Colonic mucosa (tissue), 4 donors: ENCODE measurements at regions of chr2 and their contacts with region 1.

Region 1: DNA sequence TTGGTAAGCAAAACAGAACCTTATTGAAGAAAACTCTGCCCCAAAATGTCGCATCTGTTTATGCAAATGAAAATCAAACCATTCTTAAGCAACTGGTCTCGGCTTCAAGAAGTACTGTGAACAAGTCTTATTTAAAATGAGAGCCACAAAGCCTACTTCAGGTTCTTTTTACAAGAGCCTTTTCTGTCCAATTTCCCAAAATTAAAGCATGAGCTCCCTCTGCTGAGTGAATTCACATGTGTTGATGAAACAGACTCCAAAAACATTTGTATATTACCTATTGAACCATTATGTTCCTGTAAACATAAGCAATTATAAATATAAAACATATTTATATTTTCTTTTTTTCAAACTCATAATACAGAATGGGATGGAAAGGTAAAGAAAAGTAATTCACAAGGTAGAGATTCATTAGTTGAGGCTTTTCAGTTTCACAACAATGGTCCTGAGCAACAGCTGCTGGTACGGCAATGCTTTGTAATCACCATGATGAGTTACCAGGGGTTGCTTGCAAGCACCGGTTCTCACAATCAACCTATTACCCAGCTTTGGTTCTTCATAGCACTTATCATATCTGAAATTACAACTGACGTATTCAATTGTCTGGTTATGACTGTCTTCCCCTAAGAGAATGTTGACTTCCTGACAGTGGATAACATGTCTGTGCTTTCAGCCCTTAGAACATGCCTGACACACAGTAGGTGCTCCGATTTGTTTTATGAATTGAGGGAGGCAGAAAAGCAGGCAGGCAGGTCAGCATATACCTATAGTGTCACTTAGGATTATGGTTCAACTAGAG is 108.4 kb upstream of the BZW1 start:
- DNase-seq: peak; percentile 52
- H3K4me3 ChIP-seq: no peak overlapping the region
- H3K27ac ChIP-seq: no peak overlapping the region
- H3K4me1 ChIP-seq: no peaks in the 10 kb centered on the region
- H3K27me3 ChIP-seq: no peaks in the 10 kb centered on the region
- CTCF ChIP-seq: peak; percentile 38

Region 2: DNA sequence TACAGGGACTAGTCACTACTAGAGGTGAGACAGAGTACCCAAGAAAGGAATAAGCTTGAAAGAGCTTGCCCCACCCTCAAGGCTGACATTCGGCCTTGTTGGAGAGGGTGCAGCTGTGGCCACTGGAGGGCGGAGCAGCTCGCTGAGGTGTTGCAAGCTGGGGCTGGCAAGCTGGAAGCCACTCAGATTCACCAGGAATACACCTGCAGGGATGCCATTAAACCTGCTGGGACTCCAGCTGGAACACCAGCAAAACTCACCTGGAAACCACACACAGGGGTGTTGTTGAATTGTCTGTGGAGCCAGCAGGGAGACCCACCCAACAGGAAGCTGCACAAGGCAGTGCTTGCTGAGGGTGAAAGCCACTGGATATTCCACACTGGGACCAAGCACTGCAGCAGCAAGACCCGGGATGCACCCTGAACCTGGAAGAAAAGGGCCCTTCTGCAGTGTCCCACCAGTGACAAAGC is 219.6 kb before region 1 on chr2:
- intact Hi-C with region 1: loop called (anchors 10 kb)
- DNase-seq: peak; percentile 76
- H3K4me3 ChIP-seq: no peak overlapping the region
- H3K27ac ChIP-seq: no peak overlapping the region
- H3K4me1 ChIP-seq: no peaks in the 10 kb centered on the region
- H3K27me3 ChIP-seq: no peaks in the 10 kb centered on the region
- CTCF ChIP-seq: peak; percentile 62

Region 3: GRCh38 chr2:200578778-200579177 is 124.5 kb before region 1 on chr2:
- intact Hi-C with region 1: loop called (anchors 5 kb)
- DNase-seq: no peak
- H3K4me3 ChIP-seq: no peak overlapping the region
- H3K27ac ChIP-seq: no peak overlapping the region
- H3K4me1 ChIP-seq: no peaks in the 10 kb centered on the region
- H3K27me3 ChIP-seq: no peaks in the 10 kb centered on the region
- CTCF ChIP-seq: peak; percentile 35

Region 4: GRCh38 chr2:201007561-201007998 is 304.3 kb after region 1 on chr2:
- intact Hi-C with region 1: no loop called
- DNase-seq: peak; percentile 62
- H3K4me3 ChIP-seq: no peak overlapping the region
- H3K27ac ChIP-seq: peak overlapping the region; percentile 71
- H3K4me1 ChIP-seq: no peaks in the 10 kb centered on the region
- H3K27me3 ChIP-seq: no peaks in the 10 kb centered on the region
- CTCF ChIP-seq: no peak